BJ (cell line): ENCODE measurements at regions of chr3 and their contacts with region 1.

Region 1: GRCh38 chr3:36923523-36923943 is 21.3 kb downstream of the TRANK1 start:
- DNase-seq: no peak
- H3K4me3 ChIP-seq: no peak overlapping the region
- H3K27me3 ChIP-seq: no peaks in the 10 kb centered on the region
- CTCF ChIP-seq: peak; percentile 23; the same call in 1 of the 2 replicates

Region 2: GRCh38 chr3:36933540-36934296 is 10.2 kb after region 1 on chr3:
- CTCF ChIA-PET with region 1: interaction called, 11 read pairs
- POLR2A ChIA-PET with region 1: no interaction called
- DNase-seq: no peak
- H3K4me3 ChIP-seq: no peak overlapping the region
- H3K27me3 ChIP-seq: no peaks in the 10 kb centered on the region
- CTCF ChIP-seq: no peak